CD4-positive, alpha-beta memory T cell (primary cell): ENCODE measurements at regions of chr10 and their contacts with region 1.

Region 1: GRCh38 chr10:132163278-132163765 is 23.4 kb upstream of the DPYSL4 start:
- DNase-seq: peak in 4 of 5 donors; percentile 32 to 64 (median 40)
- H3K4me3 ChIP-seq: no peak overlapping the region
- H3K4me3 Mint-ChIP-seq: peak overlapping the region in 1 of 8 donors; percentile 54
- H3K27ac ChIP-seq: no peak overlapping the region
- H3K27ac Mint-ChIP-seq: peak overlapping the region in 6 of 7 donors; percentile 17 to 99 (median 88)
- H3K4me1 ChIP-seq: peaks cover 28% of the 10 kb centered on the region
- H3K4me1 Mint-ChIP-seq: peaks cover 16 to 46% (median 34%) of the 10 kb centered on the region in 4 donors
- H3K27me3 ChIP-seq: no peaks in the 10 kb centered on the region
- H3K27me3 Mint-ChIP-seq: no peaks in the 10 kb centered on the region

Region 2: DNA sequence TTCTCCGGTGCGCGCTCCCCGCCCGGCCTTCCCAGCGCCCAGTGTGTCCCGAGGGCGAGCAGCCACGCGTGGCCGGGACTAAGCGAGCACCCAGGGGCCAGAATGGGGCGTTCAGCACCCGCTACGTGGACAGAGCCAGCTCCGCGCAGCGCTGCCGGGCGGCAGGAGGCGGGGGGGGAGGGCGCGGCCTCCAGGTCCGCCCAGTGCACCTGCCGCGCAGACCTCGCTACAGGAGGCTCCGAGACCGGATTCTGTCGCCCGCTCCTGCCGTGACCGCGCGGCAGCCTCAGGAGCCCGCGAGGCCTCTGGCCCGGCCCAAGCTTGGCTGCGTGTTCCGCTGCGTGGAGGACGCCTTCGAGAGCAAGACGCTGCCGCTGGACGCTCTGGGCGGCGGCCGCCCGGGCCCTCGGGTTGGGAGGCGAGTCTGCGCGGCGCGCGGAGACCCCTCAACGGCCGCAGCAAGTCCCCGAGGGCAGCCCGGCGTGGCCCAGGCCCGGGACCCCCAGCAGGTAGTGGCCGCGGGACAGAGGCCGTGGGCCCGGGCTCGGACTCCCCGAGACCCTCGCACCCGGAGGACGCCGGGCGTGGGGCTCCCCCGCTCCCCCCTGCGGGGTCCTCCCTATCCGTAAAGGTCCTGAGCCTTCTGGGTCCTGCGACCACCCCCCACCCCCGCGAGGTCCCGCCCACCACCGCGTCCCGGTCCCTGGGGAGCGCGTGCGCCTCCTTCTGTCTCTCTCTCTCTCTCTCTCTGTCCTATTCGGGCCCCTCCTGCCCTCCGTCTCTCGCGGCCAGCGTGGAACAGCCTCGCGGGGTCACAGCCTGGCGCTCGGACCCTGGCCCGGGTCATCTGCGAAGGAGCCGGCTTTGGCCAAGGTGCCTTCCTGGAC is 22.5 kb after region 1 on chr10:
- CTCF ChIA-PET with region 1: no interaction called
- POLR2A ChIA-PET with region 1: no interaction called
- intact Hi-C with region 1: loop called (anchors 2 kb)
- DNase-seq: peak; percentile 58 to 77 (median 73)
- H3K4me3 ChIP-seq: peak overlapping the region in 1 of 2 donors; percentile 19
- H3K4me3 Mint-ChIP-seq: peak overlapping the region in 5 of 8 donors; percentile 28 to 75 (median 68)
- H3K27ac ChIP-seq: no peak overlapping the region
- H3K27ac Mint-ChIP-seq: peak overlapping the region in 3 of 7 donors; percentile 38 to 84 (median 63)
- H3K4me1 ChIP-seq: peaks cover 15% of the 10 kb centered on the region
- H3K4me1 Mint-ChIP-seq: peaks cover 0 to 13% (median 8%) of the 10 kb centered on the region in 4 donors
- H3K27me3 ChIP-seq: peaks cover 26% of the 10 kb centered on the region
- H3K27me3 Mint-ChIP-seq: peaks cover 37 to 43% of the 10 kb centered on the region in 2 donors